Activated CD8-positive, alpha-beta T cell treated with anti-CD3 and anti-CD28 coated beads, Interleukin-2, amount 10 ng/mL, durations not matched to agents 7 days and 5 days (primary cell): ENCODE measurements at regions of chr7 and their contacts with region 1.

Region 1: DNA sequence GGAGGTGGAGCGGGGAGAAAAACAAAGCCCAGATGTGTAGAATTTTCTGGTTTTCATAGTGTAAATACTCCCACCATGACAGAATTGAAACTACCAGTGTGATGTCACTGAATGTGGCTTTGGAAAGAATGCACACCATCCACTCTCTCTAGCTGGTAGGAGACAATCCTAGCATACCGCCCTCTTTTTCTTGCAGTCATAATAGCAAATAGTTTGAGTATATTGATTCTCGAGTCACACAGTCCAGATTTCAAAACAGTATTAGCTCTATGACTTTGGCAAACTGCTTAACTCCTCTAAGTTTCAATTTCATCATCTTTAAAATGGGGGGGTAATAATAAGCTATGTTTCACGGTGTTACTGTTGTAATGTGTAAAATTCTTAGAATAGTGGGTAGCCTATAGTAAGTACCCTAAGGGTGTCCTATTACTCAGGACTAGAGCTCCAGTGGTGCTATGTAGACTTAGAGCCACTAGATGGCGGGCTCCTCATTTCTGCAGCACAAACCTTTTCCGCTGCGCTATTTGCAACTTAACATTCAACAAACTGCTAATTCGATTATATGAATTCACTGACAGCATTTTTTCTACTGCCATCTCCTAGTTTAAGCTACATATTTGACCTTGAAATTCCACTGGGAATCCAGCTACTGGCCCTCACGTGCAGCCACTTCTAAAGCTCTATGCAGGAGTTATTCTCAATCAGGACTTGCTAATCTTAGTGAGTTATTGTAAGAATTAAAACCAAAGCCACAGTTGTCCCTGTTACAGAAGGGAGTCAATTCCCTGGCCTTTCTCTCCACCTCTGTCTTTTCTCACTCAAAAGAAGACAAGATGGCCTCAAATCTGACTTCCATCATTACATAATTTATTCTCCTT is 18.7 kb downstream of the TAS2R40 start:
- DNase-seq: peak; percentile 83
- ATAC-seq: peak; percentile 85
- H3K4me3 Mint-ChIP-seq: no peak overlapping the region
- H3K27ac Mint-ChIP-seq: peak overlapping the region; percentile 51
- H3K4me1 Mint-ChIP-seq: peaks cover 37% of the 10 kb centered on the region
- H3K27me3 Mint-ChIP-seq: peaks cover 11% of the 10 kb centered on the region

Region 2: GRCh38 chr7:143223784-143224183 is 16.7 kb before region 1 on chr7:
- CTCF ChIA-PET with region 1: interaction called, 12 read pairs
- POLR2A ChIA-PET with region 1: no interaction called
- DNase-seq: no peak
- ATAC-seq: no peak
- H3K4me3 Mint-ChIP-seq: no peak overlapping the region
- H3K27ac Mint-ChIP-seq: no peak overlapping the region
- H3K4me1 Mint-ChIP-seq: no peaks in the 10 kb centered on the region
- H3K27me3 Mint-ChIP-seq: peaks cover 27% of the 10 kb centered on the region

Region 3: GRCh38 chr7:143271240-143271639 is 30.7 kb after region 1 on chr7:
- CTCF ChIA-PET with region 1: interaction called, 224 read pairs
- POLR2A ChIA-PET with region 1: no interaction called
- DNase-seq: no peak
- ATAC-seq: no peak
- H3K4me3 Mint-ChIP-seq: no peak overlapping the region
- H3K27ac Mint-ChIP-seq: no peak overlapping the region
- H3K4me1 Mint-ChIP-seq: peaks cover 12% of the 10 kb centered on the region
- H3K27me3 Mint-ChIP-seq: no peaks in the 10 kb centered on the region

Region 4: DNA sequence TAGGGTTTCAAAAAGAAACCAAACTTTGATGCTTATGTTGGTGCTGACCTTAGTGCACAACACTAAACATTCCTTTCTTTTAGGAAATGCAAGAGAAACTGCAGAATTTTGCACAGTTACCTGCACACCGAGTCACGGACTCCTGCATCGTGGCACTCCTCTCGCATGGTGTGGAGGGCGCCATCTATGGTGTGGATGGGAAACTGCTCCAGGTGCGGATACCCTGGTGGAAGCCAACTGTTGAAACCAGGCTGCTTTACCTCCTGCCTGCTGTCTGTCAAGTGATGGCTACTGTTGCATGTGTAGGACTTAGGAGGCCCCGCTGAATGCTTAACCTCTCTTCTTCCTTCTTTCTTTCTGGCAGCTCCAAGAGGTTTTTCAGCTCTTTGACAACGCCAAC is 59.3 kb after region 1 on chr7:
- CTCF ChIA-PET with region 1: interaction called, 274 read pairs
- POLR2A ChIA-PET with region 1: interaction called, 5 read pairs
- DNase-seq: peak; percentile 71
- ATAC-seq: peak; percentile 87
- H3K4me3 Mint-ChIP-seq: no peak overlapping the region
- H3K27ac Mint-ChIP-seq: no peak overlapping the region
- H3K4me1 Mint-ChIP-seq: peaks cover 52% of the 10 kb centered on the region
- H3K27me3 Mint-ChIP-seq: no peaks in the 10 kb centered on the region

Region 5: DNA sequence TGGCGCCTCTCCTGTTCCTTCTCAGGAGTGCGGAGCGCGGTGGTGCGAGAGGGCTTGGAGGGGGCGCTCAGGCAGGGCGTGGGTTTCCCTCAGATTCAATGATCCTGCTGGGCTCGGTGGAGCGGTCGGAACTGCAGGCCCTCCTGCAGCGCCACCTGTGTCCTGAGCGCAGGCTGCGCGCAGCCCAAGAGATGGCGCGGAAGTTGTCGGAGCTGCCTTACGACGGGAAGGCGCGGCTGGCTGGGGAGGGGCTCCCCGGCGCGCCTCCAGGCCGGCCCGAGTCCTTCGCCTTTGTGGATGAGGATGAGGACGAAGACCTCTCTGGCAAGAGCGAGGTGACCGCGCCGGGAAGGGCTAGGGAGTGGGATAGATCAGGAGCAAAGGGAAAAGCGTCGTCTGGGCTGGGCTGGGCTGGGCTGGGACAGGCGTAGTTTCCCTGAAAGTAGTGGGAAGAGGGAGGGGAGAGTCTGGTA is 104.9 kb after region 1 on chr7:
- CTCF ChIA-PET with region 1: interaction called, 17 read pairs
- POLR2A ChIA-PET with region 1: no interaction called
- DNase-seq: peak; percentile 76
- ATAC-seq: peak; percentile 100
- H3K4me3 Mint-ChIP-seq: peak overlapping the region; percentile 65
- H3K27ac Mint-ChIP-seq: peak overlapping the region; percentile 53
- H3K4me1 Mint-ChIP-seq: peaks cover 9% of the 10 kb centered on the region
- H3K27me3 Mint-ChIP-seq: peaks cover 36% of the 10 kb centered on the region

Region 6: DNA sequence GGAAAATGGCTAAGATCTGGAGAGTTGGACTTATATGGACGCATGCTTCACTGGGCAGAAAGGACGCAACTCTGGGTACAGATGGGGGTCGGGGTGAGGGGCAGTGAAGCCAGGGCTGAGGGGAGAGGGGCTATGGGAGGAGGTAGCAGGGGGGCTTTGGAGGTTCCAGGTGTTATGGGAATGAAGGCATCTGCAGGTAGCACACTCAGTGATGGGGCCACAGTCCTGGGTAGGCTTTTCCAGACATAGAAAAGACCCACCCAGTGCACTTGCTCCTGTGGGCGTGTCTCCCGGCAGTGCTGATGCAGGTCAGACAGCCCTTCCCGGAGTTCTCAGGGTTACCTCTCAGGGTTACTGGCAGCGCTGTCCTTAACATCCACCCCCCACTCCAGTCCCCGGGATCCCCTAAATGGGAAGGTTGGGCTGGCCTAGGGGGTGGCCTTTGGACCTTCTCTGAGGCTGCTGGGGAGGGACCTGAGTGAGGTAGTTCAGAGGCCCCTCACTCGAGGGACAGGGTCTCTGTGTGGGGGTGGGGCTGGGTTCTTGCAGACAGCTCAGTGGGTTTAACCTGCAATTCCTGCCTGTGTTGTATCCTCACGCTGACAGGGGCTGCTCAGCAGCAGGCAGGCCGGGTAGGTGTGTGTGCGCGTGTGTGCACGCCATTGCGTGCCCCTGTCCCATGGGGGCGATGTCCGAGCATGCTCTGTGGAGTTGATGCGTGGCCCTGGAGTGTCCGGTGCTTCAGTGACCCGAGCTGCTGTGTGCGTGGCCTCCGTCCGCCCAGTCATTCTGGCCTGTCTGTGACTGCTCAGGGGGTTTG is 146.8 kb after region 1 on chr7:
- CTCF ChIA-PET with region 1: interaction called, 11 read pairs
- POLR2A ChIA-PET with region 1: no interaction called
- DNase-seq: no peak
- ATAC-seq: no peak
- H3K4me3 Mint-ChIP-seq: no peak overlapping the region
- H3K27ac Mint-ChIP-seq: no peak overlapping the region
- H3K4me1 Mint-ChIP-seq: peaks cover 26% of the 10 kb centered on the region
- H3K27me3 Mint-ChIP-seq: no peaks in the 10 kb centered on the region